ENCODE measurements at regions of chr11 and their contacts with region 1.

Region 1: DNA sequence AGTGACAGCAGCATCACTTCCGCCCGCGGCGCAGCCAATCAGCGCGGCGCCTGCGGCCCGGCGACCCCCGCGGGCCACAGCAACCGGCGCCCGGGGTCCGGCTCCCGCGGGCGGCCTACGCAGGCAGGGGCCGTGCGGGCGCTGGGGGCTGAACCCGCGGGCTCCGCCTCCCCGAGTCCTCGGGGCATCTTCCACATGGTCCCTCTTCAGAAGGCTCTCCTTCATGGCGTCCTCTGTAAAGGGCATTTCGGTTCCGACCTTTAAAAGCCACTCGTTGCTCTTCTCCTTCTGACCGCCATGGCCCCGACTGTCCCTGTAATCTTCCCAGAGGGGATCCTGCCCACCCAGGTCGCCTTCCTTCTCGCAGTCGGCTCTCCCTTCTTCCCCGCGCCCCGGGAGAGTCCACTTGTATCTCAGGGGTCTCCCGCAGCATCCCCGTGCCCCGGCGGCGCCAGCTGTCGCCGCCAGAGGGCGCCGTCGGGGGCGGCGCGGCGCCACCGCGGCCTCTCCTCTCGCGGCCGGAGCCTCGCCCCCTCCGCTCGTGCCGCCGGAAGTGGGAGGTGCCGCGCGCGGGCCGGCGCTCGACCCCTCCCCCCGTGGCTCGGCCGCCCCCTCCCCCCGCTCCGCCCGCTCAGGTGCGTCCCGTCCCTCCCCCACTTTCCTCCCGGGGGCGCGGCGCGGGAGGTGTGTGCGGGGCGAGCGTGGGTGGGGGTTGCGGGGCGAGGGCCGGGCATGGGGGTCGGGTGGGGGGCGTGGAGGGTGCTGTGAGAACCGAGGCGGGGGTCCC is at the start of gene RNF214:
- DNase-seq: peak; percentile 80
- H3K4me3 ChIP-seq: peak within 1 kb of the TSS; percentile 97
- H3K27ac ChIP-seq: peak within 1 kb of the TSS; percentile 94
- H3K4me1 ChIP-seq: peaks cover 6% of the 10 kb centered on the region
- H3K27me3 ChIP-seq: no peaks in the 10 kb centered on the region
- CTCF ChIP-seq: peak; percentile 75
- total RNA-seq, gene RNF214: 20.0 to 20.3 TPM

Region 2: DNA sequence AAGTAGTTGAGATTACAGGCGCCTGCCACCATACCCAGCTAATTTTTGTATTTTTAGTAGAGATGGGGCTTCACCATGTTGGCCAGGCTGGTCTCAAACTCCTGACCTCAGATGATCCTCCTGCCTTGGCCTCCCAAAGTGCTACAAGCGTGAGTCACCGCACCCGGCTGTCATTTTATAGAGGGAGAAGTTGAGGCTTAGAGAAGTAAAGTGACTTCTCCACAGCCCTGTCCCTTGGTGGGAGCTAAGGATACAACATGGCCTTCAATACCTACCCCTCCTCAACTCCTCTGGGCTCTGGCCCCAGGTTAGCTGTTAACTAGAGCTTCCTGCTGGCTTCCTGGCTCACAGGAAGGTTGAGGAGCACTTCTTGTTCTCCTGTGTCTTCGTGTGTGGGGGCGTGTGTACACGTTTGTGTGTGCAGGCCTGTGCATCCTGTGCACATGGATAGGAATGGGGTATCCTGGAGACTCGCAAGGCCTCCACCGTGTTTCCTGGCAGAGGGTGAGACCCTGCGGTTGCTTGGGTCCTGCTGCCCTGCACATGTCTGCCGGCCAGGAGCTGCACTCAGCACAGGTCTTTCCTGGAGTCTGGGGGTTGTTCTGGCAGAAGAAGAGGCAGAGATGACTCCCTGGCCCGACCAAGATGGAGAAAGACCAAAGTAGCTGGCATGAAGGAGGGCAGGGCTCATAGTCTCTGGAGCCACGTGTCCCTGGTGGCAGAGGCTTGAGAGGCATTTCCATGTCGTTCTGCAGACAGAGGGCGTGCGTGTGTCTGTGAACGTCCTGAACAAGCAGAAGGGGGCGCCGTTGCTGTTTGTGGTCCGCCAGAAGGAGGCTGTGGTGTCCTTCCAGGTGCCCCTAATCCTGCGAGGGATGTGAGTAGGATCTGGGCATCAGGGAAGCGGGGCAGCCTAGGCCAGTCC is 51.4 kb before region 1 on chr11:
- intact Hi-C with region 1: loop called (anchors 2 kb)
- DNase-seq: peak; percentile 87
- H3K4me3 ChIP-seq: no peak overlapping the region
- H3K27ac ChIP-seq: no peak overlapping the region
- H3K4me1 ChIP-seq: no peaks in the 10 kb centered on the region
- H3K27me3 ChIP-seq: no peaks in the 10 kb centered on the region
- CTCF ChIP-seq: peak; percentile 59

Region 3: GRCh38 chr11:117192081-117192875 is 40.0 kb before region 1 on chr11:
- intact Hi-C with region 1: no loop called
- DNase-seq: no peak
- H3K4me3 ChIP-seq: no peak overlapping the region
- H3K27ac ChIP-seq: no peak overlapping the region
- H3K4me1 ChIP-seq: no peaks in the 10 kb centered on the region
- H3K27me3 ChIP-seq: no peaks in the 10 kb centered on the region
- CTCF ChIP-seq: no peak

Region 4: DNA sequence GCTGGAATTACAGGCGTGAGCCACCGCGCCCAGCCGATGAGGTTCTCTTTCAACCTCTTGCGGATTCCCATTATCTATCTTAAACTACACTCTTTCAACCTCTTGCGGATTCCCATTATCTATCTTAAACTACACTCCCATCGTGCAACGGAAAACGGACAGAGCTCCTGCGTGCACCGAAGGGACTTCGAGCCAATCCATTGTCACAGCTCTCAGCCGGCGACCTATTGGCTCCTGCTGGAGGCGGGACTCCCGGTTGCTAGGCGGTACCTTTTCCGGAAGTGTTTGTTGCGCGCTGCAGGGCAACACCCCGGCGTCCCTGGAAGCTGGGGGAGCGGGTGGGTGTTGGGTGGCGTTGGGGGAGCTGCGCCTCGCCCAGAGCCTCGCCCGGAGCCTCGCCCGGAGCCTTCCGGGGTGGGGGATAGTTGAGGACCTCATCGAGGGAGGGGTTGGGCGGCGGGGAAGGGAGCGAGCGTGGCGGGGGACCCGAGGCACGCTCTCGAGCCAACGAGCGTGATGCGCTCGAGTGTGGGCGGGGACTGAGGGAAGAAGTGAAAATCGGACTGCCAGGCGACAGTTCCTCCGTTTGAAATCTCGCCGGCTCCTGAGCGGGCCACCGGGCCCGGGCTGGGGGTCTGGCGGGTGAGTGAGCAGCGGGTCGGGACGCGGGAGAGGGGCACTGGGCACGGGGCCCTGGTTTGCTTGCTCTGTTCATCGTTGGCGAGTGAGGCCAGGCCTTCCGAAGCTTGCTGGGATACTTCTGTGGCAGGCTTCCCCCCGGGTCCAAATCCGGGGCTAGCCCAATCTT is 95.5 kb after region 1 on chr11 and contains the start of gene CEP164:
- intact Hi-C with region 1: loop called (anchors 5 kb)
- DNase-seq: peak; percentile 97
- H3K4me3 ChIP-seq: peak within 1 kb of the TSS; percentile 75
- H3K27ac ChIP-seq: peak within 1 kb of the TSS; percentile 85
- H3K4me1 ChIP-seq: peaks cover 5% of the 10 kb centered on the region
- H3K27me3 ChIP-seq: no peaks in the 10 kb centered on the region
- CTCF ChIP-seq: no peak
- total RNA-seq, gene CEP164: 12.4 to 19.2 TPM

Region 5: DNA sequence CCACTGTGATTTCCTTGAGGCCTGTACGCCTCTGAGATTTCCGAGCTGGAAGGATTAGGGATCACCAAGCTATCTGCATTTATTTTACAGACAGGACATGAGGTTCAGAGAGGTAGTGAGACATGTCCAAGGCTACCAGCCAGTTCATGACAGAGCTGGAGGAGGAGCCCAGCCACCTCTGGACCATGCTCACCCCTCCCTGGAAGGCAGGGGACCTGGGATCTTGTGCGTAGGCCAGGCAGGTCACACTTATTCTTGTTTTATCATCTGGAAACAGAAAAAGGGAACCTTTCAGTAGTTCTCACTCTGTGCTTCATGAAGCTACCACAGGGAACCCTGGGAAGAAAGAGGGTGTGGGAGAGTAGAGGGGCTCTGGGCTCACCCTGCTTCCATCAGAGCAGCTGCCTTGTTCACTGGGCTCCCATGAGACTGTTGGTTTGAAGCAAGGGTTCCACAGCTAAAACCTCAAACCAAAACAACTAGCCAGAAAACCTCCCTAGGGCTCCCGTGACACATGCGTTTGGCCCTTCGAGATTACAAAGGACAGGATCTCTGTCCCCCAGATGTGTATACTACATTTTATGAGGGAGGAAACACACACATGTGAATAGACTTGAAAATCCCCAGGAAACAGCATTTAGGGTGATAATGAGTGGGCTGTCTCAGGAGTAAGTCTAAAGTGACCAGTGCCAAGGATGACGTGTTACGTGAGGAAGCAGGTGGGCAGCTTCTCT is 458.4 kb after region 1 on chr11:
- intact Hi-C with region 1: no loop called
- DNase-seq: no peak
- H3K4me3 ChIP-seq: no peak overlapping the region
- H3K27ac ChIP-seq: no peak overlapping the region
- H3K4me1 ChIP-seq: no peaks in the 10 kb centered on the region
- H3K27me3 ChIP-seq: no peaks in the 10 kb centered on the region
- CTCF ChIP-seq: no peak

Measured in colonic mucosa (tissue), 4 donors.